ENCODE measurements at regions of chr20 and their contacts with region 1.

Region 1: GRCh38 chr20:20237093-20237959 is 130.6 kb upstream of the INSM1 start:
- DNase-seq: peak; percentile 55
- ATAC-seq: peak; percentile 92
- H3K4me3 ChIP-seq: no peak overlapping the region
- H3K27ac ChIP-seq: no peak overlapping the region
- H3K4me1 ChIP-seq: no peaks in the 10 kb centered on the region
- H3K27me3 ChIP-seq: peaks cover 4 to 23% of the 10 kb centered on the region in 2 experiments; a peak in 2 of 5 replicates
- CTCF ChIP-seq: peak; percentile 89
- EP300 ChIP-seq: no peak
- POLR2A ChIP-seq: no peak
- RAD21 ChIP-seq: peak; percentile 56; the same call in 1 of the 2 replicates

Region 2: GRCh38 chr20:20083807-20084206 is 153.5 kb before region 1 on chr20:
- CTCF ChIA-PET with region 1: interaction called, 33 read pairs
- POLR2A ChIA-PET with region 1: no interaction called
- in situ Hi-C with region 1: loop called (anchors 5 kb)
- intact Hi-C with region 1: loop called (anchors 1 kb)
- DNase-seq: peak; percentile 52
- ATAC-seq: peak; percentile 84
- H3K4me3 ChIP-seq: no peak overlapping the region; a peak in 1 of 6 replicates
- H3K27ac ChIP-seq: no peak overlapping the region
- H3K4me1 ChIP-seq: 0 out of 2 replicates have a peak, but pooled peaks cover 12% of the 10 kb centered on the region
- H3K27me3 ChIP-seq: peaks cover 0 to 17% of the 10 kb centered on the region in 2 experiments; a peak in 2 of 5 replicates
- CTCF ChIP-seq: peak; percentile 73
- EP300 ChIP-seq: no peak
- POLR2A ChIP-seq: no peak
- RAD21 ChIP-seq: peak; percentile 21; the same call in 1 of the 2 replicates

Region 3: GRCh38 chr20:20130399-20130798 is 106.9 kb before region 1 on chr20:
- CTCF ChIA-PET with region 1: interaction called, 12 read pairs
- POLR2A ChIA-PET with region 1: no interaction called
- in situ Hi-C with region 1: no loop called
- intact Hi-C with region 1: loop called (anchors 1 kb)
- DNase-seq: peak; percentile 59
- ATAC-seq: peak; percentile 92
- H3K4me3 ChIP-seq: no peak overlapping the region
- H3K27ac ChIP-seq: no peak overlapping the region
- H3K4me1 ChIP-seq: no peaks in the 10 kb centered on the region
- H3K27me3 ChIP-seq: no peaks in the 10 kb centered on the region
- CTCF ChIP-seq: peak; percentile 84
- EP300 ChIP-seq: no peak
- POLR2A ChIP-seq: no peak
- RAD21 ChIP-seq: peak; percentile 82

Region 4: GRCh38 chr20:20184149-20184548 is 53.2 kb before region 1 on chr20:
- CTCF ChIA-PET with region 1: no interaction called
- POLR2A ChIA-PET with region 1: no interaction called
- in situ Hi-C with region 1: no loop called
- intact Hi-C with region 1: loop called (anchors 2 kb)
- DNase-seq: no peak
- ATAC-seq: no peak
- H3K4me3 ChIP-seq: no peak overlapping the region
- H3K27ac ChIP-seq: no peak overlapping the region
- H3K4me1 ChIP-seq: no peaks in the 10 kb centered on the region
- H3K27me3 ChIP-seq: no peaks in the 10 kb centered on the region
- CTCF ChIP-seq: peak; percentile 56
- EP300 ChIP-seq: no peak
- POLR2A ChIP-seq: no peak
- RAD21 ChIP-seq: no peak

Region 5: DNA sequence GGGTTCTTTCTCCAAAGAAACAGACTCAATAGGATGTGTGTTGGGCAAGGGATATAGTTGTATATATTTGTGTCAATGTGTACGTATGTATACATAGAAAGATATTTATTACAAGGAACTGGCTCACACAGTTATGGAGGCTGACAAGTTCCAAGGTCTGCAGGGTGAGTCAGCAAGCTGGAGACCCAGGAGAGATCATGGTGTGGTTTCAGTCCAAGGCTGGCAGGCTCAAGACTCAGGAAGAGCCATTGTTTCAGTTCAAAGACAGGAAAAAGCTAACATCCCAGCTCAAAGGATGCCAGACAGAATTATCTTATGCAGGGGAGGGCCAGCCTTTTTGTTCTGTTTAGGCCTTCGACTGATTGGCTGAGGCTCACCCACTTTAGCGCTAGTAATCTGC is 565.0 kb after region 1 on chr20:
- CTCF ChIA-PET with region 1: no interaction called
- POLR2A ChIA-PET with region 1: no interaction called
- in situ Hi-C with region 1: no loop called
- intact Hi-C with region 1: loop called (anchors 10 kb)
- DNase-seq: no peak
- ATAC-seq: no peak
- H3K4me3 ChIP-seq: no peak overlapping the region
- H3K27ac ChIP-seq: no peak overlapping the region
- H3K4me1 ChIP-seq: peaks cover 4% of the 10 kb centered on the region; the same call in 1 of the 2 replicates
- H3K27me3 ChIP-seq: peaks cover 7 to 31% of the 10 kb centered on the region in 2 experiments; a peak in 3 of 5 replicates
- CTCF ChIP-seq: no peak
- EP300 ChIP-seq: no peak
- POLR2A ChIP-seq: no peak
- RAD21 ChIP-seq: no peak